GM10248 (cell line): ENCODE measurements at regions of chr11 and their contacts with region 1.

Region 1: DNA sequence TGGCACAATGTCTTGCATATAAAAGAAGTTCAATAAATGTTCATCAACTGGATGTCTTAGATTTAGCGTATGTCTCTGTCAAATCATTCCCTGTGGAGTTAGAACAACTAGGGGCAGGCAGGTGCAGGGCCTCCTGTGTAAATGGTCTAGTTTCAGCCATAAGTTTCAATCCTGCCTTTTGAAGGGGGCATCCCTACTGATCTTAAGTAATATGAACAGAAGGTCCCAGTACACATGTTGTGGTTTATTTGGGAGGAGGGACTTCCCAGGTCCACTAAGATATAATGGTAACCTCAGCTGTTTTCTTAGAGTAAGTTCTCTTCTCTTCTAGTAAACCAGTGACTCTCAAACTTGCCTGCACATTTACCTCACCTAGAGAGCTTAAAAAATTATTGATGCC is 19.8 kb downstream of the TTC12 start:
- DNase-seq: no peak
- CTCF ChIP-seq: no peak

Region 2: DNA sequence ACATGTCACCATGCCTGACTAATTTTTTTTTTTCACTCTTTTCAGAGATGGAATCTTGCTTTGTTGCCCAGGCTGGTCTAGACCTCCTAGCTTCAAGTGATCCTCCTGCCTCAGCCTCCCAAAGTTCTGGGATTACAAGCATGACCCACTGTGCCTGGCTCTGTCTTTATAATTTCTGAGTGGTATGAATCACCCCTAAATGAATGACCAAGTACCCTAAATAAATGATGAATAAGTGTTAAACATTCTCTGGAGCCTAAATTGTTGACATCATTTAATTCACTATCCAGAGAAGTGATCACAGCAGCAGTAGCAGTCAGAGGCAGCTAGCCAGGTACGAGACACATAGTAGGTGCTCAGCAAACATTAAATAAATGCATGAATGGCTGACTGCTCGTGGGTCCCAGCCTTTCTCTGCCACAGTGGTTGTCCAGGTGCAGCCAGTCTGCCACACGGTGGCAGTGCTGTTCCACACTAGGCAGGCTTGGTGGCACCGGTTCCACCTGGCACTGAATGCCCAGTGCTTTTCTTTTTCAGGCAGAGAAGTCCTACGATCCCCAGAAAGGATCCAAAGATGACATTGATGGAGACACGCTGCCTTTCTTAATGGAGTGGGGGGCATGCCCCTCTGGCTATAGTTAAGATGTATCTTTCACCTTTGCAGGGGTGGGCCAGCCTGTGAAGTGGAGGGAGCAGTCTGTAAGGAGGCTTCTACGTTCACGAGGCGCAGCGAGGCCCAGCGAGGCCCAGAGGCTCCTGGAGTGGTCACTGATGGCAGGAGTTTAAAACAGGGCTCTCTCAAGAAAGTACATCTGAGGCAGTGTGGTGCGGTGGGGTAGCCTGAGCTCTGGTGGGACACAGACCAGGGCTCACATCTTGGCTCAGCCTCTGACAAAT is 28.5 kb before region 1 on chr11:
- CTCF ChIA-PET with region 1: interaction called, 10 read pairs
- POLR2A ChIA-PET with region 1: no interaction called
- DNase-seq: peak; percentile 61
- CTCF ChIP-seq: peak; percentile 97

Region 3: DNA sequence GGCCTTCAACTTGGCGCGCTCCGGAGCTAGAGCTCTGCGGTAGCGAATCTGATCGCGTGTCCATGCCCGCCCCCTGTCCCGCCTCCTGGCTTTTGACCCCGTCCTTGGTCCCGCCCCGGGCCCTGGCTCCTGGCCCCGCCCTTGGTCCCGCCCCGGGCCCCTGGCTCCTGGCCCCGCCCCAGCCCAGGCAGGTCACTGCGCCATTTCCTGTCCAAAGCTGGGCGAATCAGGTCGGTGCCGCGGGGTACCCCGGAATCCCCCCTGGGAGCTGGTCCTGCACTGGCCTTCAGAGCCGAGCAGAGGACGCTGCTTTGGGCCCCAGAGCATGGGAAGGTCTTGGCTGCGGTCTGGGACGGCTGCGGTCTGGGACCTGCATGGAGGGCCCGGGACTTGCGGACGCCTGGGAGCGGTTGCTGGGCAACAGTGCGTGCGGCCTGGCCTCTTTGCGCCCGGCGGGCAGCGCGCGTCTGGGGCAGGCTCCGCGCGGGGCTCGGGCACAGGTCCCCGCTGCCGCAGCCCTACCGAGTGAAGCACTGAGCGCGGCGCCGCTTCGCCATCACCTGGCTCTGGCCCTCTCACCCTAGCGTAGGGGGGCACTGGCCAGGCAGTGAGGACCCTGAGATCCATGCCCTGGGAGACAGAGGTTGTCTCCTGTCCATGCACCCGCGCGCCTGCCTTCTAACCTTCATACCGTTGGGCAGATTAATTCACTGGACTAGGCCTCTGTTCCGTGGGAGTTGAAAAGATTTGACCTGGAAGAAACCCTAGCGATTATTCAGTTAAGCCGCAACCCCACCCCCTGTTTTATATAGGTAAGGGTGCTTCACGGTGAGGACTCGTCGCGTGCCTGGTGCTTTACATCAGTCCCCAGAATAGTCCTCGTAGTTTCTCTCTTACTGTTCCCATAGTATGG is 19.5 kb before region 1 on chr11 and contains the start of gene TTC12:
- CTCF ChIA-PET with region 1: interaction called, 16 read pairs
- POLR2A ChIA-PET with region 1: no interaction called
- DNase-seq: peak; percentile 95
- CTCF ChIP-seq: no peak